Tibial artery (tissue), 4 donors: ENCODE measurements at regions of chr1 and their contacts with region 1.

Region 1: DNA sequence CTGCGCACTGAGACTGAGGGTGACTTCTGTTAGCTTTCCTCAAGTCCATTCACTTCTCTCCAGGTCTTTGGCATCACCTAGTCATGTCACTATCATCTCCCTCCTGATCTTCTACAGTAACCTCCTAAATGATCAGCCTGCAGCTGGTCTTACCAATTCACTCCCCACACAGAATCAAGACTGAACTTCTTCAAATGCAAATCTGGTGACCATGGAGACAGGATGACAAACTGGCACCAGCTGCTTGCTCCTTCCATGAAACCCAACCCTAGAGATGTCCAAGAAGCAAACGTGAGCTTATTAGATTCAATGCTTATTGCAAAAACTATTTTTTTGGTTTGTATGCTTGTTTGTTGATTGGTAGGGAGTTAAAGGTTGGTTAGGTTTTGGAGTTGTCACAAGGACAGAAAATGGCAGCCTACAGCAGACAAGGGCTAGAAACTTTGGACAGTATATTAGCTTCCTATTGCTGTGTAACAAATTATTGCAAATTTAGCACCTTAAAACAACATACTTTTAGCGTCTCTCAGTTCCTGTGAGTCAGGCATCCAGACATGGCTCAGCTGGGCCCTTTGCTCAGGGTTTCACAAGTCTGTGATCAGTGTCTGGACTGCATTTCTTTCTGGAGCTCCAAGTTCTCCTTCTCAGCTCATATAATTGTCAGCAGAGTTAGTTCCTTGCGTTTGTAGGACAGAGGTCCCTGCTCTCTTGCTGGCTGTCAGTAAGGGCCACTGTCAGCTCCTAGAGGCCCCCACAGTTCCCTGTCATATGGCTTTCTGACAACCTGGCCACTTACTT is 53.3 kb upstream of the GJA8 start:
- DNase-seq: no peak
- H3K4me3 ChIP-seq: no peak overlapping the region
- H3K27ac ChIP-seq: no peak overlapping the region
- H3K4me1 ChIP-seq: no peaks in the 10 kb centered on the region
- H3K27me3 ChIP-seq: no peaks in the 10 kb centered on the region
- CTCF ChIP-seq: no peak

Region 2: GRCh38 chr1:147717063-147717565 is 132.2 kb before region 1 on chr1:
- intact Hi-C with region 1: no loop called
- DNase-seq: no peak
- H3K4me3 ChIP-seq: no peak overlapping the region
- H3K27ac ChIP-seq: no peak overlapping the region
- H3K4me1 ChIP-seq: no peaks in the 10 kb centered on the region
- H3K27me3 ChIP-seq: peaks cover 0 to 8% of the 10 kb centered on the region in 2 donors
- CTCF ChIP-seq: no peak

Region 3: DNA sequence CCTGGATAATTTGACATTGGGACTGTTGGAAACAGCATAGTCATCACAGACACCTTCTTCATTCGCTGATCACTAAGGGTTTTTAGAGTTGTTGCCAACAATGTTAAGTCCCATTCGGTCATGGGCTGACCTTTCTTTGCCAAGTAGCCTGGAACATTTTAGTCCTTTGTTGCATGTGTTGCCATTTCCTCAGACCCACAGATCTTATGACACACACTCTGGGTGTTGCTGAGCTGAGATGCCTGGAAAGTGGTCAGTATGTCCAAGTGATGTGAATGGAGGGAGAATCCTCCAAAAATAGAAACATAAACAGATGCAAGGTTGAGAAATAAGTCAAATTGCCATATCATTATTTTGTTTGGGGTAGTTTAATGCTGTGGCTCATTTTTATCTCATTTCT is 27.4 kb before region 1 on chr1:
- intact Hi-C with region 1: no loop called
- DNase-seq: no peak
- H3K4me3 ChIP-seq: no peak overlapping the region
- H3K27ac ChIP-seq: no peak overlapping the region
- H3K4me1 ChIP-seq: no peaks in the 10 kb centered on the region
- H3K27me3 ChIP-seq: no peaks in the 10 kb centered on the region
- CTCF ChIP-seq: no peak

Region 4: GRCh38 chr1:147833231-147833840 is 16.0 kb before region 1 on chr1:
- intact Hi-C with region 1: loop called (anchors 2 kb)
- DNase-seq: no peak
- H3K4me3 ChIP-seq: no peak overlapping the region
- H3K27ac ChIP-seq: no peak overlapping the region
- H3K4me1 ChIP-seq: no peaks in the 10 kb centered on the region
- H3K27me3 ChIP-seq: no peaks in the 10 kb centered on the region
- CTCF ChIP-seq: no peak